ENCODE measurements at regions of chr3 and their contacts with region 1.

Region 1: GRCh38 chr3:98039322-98040024 is 4.4 kb upstream of the GABRR3 start:
- DNase-seq: peak; percentile 89
- ATAC-seq: peak; percentile 89
- H3K4me3 ChIP-seq: peak overlapping the region; percentile 61
- H3K27ac ChIP-seq: no peak overlapping the region
- H3K4me1 ChIP-seq: no peaks in the 10 kb centered on the region
- H3K27me3 ChIP-seq: peaks cover 16% of the 10 kb centered on the region
- CTCF ChIP-seq: peak; percentile 98

Region 2: DNA sequence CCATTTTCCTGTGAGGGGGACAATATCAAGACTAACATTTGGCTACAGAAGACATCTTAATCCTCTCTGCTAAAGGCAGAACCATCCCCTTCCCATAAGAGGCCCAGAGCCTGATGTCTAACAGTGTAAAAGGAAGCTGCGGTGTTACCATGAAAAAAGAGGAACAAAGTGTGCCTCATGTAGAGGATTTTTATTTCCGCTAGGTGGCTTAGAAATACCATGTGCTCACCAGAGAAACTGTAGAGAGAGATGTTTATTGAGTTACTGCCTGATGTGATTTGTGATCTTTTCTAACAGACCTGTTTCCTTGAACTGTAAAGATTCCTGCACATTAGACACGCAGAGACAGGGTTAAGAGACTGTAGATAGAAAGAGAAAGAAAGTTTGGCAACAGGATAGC is 149.1 kb after region 1 on chr3:
- CTCF ChIA-PET with region 1: no interaction called
- POLR2A ChIA-PET with region 1: no interaction called
- intact Hi-C with region 1: loop called (anchors 1 kb)
- DNase-seq: peak; percentile 56
- ATAC-seq: peak; percentile 85
- H3K4me3 ChIP-seq: no peak overlapping the region
- H3K27ac ChIP-seq: no peak overlapping the region
- H3K4me1 ChIP-seq: no peaks in the 10 kb centered on the region
- H3K27me3 ChIP-seq: peaks cover 13% of the 10 kb centered on the region; the same call in 1 of the 2 replicates
- CTCF ChIP-seq: peak; percentile 65

Region 3: GRCh38 chr3:98513091-98513511 is 473.6 kb after region 1 on chr3:
- CTCF ChIA-PET with region 1: no interaction called
- POLR2A ChIA-PET with region 1: no interaction called
- intact Hi-C with region 1: loop called (anchors 2 kb)
- DNase-seq: peak; percentile 89
- ATAC-seq: peak; percentile 83
- H3K4me3 ChIP-seq: peak overlapping the region; percentile 3; the same call in 1 of the 2 replicates
- H3K27ac ChIP-seq: peak overlapping the region; percentile 77
- H3K4me1 ChIP-seq: peaks cover 31% of the 10 kb centered on the region
- H3K27me3 ChIP-seq: no peaks in the 10 kb centered on the region
- CTCF ChIP-seq: no peak

Region 4: DNA sequence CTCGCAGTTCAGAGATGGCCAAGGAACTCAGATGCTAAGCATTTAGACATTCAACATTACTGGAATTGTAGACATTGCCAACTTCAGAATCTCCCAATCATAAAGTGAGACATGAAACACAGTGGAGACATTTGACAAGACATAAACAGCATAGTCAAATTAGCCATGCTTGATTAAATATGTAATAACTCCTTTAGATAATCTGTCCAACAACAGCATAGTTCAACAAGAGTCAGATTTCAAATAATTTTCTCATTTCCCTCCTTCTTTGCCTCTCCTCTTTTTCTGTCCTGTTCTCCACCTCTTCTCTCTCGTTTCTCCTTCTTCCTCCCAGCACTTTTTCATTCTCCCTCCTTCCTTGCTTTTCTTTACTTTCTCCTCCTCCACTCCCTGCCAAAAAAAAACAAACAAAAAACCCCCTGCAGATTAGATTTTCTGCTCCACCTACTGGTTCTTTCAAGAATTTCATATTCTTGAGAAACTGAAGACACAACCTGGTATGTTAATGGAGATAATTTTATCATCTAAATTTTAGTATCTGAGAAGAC is 533.8 kb after region 1 on chr3:
- CTCF ChIA-PET with region 1: interaction called, 3 read pairs
- POLR2A ChIA-PET with region 1: no interaction called
- intact Hi-C with region 1: loop called (anchors 1 kb)
- DNase-seq: peak; percentile 76
- ATAC-seq: peak; percentile 60
- H3K4me3 ChIP-seq: no peak overlapping the region
- H3K27ac ChIP-seq: no peak overlapping the region
- H3K4me1 ChIP-seq: peaks cover 16% of the 10 kb centered on the region
- H3K27me3 ChIP-seq: no peaks in the 10 kb centered on the region
- CTCF ChIP-seq: peak; percentile 89

Region 5: DNA sequence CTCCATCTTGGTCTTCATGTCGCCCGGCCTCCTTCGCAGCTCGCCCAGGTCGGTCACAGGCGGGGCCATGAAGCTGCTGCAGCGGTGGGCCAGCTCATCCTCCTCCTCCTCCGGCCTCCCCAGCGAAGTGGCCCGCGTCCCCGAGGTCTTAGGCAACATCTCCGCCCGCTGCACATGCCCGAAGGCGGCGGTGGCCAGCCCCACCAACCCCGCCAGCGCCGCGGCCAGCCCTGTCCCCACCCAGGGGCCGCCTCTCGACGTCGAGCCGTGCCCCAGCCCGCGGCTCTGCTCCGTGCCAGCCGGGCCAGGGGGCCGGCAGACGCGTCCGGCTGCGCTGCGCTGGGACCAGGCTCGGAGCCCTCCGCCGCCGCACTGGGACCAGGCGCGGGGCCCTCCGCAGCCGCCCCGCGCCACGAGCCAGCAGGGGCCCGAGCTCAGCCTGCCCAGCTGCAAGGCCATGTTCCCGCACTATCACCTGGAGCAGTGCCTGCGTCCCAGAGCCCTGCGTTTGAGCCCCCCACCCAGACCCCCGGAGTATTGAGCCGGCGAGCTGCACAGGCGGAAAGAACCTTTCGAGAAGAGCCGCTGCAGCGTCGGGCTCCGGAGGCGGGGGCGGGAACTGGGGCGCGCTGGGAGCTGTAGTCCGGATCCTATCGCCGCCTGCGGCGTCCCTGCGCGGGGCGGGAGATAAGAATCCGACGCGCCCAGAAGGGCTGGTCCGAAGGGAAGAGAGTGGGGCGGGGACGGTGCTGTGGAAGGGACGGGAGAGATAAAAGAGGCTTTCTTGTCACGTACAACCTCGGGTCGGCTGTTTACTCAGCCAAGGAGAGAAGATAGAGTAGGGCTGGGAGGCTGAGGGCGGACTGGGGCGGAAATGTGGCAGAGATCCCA is 553.8 kb after region 1 on chr3 and contains the start of gene CPOX:
- CTCF ChIA-PET with region 1: no interaction called
- POLR2A ChIA-PET with region 1: no interaction called
- intact Hi-C with region 1: loop called (anchors 1 kb)
- DNase-seq: peak; percentile 96
- ATAC-seq: peak; percentile 97
- H3K4me3 ChIP-seq: peak within 1 kb of the TSS; percentile 97
- H3K27ac ChIP-seq: peak within 1 kb of the TSS; percentile 15
- H3K4me1 ChIP-seq: peaks cover 12% of the 10 kb centered on the region
- H3K27me3 ChIP-seq: no peaks in the 10 kb centered on the region
- CTCF ChIP-seq: no peak
- total RNA-seq, gene CPOX: 62.0 and 86.2 TPM in 2 replicates

Measured in PC-3 (cell line).